BJ (cell line): ENCODE measurements at regions of chr16 and their contacts with region 1.

Region 1: GRCh38 chr16:1705688-1706385 is at the start of gene MAPK8IP3:
- DNase-seq: peak; percentile 47
- H3K4me3 ChIP-seq: peak within 1 kb of the TSS; percentile 98
- H3K27me3 ChIP-seq: no peaks in the 10 kb centered on the region
- CTCF ChIP-seq: peak; percentile 39
- polyA plus RNA-seq, gene MAPK8IP3: 12.3 and 22.5 TPM in 2 replicates

Region 2: GRCh38 chr16:1691276-1691675 is 14.6 kb before region 1 on chr16:
- CTCF ChIA-PET with region 1: interaction called, 23 read pairs
- POLR2A ChIA-PET with region 1: no interaction called
- DNase-seq: no peak
- H3K4me3 ChIP-seq: no peak overlapping the region
- H3K27me3 ChIP-seq: no peaks in the 10 kb centered on the region
- CTCF ChIP-seq: peak; percentile 40

Region 3: DNA sequence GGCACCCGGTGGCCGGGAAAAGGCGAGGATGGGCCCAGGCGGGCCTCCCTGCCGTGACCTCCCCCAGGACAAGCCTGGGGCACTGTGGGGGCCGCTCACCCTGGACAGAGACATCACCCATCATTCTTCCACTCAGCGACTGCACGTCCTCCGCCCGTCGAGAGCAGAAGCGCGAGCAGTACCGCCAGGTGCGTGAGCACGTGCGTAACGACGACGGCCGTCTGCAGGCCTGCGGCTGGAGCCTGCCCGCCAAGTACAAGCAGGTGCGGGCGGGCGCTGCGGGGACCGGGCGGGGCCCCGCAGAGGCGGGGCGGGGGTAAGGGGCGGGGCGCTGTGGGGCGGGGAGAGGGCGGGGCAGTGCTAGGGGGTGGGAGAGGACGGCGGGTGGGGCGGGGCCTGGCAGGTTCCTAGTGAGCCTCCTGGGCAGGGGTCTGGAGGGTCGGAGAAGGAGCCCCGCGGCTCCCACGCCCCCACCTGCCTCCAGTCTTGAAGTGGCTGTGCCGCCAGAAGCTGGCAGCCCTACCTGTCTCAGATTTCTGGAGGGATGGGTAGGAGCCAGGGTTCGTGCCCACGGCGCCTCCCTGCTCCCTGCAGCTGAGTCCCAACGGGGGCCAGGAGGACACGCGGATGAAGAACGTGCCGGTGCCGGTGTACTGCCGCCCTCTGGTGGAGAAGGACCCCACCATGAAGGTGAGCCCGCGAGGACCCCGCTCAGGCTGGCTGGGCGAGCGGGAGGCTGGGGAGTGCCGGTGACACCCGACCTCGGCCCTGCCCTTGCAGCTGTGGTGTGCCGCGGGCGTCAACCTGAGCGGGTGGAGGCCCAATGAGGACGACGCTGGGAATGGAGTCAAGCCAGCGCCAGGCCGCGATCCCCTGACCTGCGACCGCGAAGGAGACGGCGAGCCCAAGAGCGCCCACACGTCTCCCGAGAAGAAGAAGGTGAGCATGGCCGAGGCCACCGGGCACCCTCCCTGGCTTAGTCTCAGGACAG is 58.0 kb after region 1 on chr16:
- CTCF ChIA-PET with region 1: interaction called, 14 read pairs
- POLR2A ChIA-PET with region 1: no interaction called
- DNase-seq: no peak
- H3K4me3 ChIP-seq: no peak overlapping the region
- H3K27me3 ChIP-seq: no peaks in the 10 kb centered on the region
- CTCF ChIP-seq: peak; percentile 59

Region 4: DNA sequence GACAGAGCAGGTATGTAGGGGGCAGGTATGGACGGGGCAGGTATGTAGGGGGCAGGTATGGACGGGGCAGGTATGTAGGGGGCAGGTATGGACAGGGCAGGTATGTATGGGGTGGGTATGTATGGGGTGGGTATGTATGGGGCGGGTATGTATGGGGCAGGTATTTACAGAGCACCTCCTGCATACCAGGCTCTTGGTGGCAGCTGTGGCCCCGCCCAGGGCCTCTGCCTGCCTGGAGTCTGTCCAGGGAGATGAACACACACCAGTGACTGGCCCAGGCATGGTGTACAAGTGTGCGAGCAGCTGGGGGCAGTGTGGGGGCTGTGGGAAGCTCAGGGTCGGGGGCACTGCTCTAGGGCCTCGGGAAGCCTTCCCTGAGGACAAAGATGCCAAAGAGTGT is 244.2 kb after region 1 on chr16:
- CTCF ChIA-PET with region 1: no interaction called
- POLR2A ChIA-PET with region 1: no interaction called
- DNase-seq: no peak
- H3K4me3 ChIP-seq: no peak overlapping the region
- H3K27me3 ChIP-seq: no peaks in the 10 kb centered on the region
- CTCF ChIP-seq: no peak

Region 5: DNA sequence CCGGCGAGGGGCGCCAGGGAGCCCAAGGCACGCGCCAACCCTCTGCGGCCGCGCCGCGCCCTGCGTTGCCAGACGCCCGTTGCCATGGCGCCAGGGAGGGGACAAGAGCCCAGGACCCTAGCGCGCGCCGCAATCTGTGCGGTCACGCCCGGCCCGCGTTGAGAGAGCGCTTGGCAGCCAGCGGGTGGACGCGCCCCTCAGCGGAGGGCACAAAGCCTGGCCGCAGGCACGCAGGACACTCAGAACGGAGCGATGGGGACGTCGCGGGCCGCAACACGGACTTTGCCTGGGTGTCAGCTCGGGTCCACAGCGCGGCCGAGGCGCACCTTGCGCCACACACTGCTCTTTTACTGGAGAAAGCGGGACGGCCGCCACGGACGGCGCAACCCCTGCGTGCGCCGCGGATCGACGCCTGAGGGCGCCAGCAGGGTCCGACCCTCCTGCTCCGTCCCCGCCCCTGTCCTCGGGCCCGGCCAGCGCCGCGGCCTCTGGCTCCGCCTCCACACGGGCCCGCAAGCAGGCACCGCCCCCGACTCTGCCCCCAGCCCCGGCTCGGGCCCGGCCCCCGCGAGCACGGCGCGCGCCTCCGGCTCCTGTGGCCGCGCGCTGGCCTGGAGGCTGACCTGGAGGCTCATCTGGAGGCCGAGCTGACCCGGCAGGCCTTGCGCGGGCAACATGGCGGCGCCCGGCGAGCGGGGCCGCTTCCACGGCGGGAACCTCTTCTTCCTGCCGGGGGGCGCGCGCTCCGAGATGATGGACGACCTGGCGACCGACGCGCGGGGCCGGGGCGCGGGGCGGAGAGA is 277.9 kb after region 1 on chr16 and contains the start of gene GFER:
- CTCF ChIA-PET with region 1: no interaction called
- POLR2A ChIA-PET with region 1: no interaction called
- DNase-seq: peak; percentile 51
- H3K4me3 ChIP-seq: peak within 1 kb of the TSS; percentile 82
- H3K27me3 ChIP-seq: peaks cover 12% of the 10 kb centered on the region
- CTCF ChIP-seq: peak; percentile 41
- polyA plus RNA-seq, gene GFER: 14.6 and 19.8 TPM in 2 replicates